Activated CD8-positive, alpha-beta T cell treated with anti-CD3 and anti-CD28 coated beads, Interleukin-2, amount 10 ng/mL, durations not matched to agents 7 days and 5 days (primary cell): ENCODE measurements at regions of chr5 and their contacts with region 1.

Region 1: DNA sequence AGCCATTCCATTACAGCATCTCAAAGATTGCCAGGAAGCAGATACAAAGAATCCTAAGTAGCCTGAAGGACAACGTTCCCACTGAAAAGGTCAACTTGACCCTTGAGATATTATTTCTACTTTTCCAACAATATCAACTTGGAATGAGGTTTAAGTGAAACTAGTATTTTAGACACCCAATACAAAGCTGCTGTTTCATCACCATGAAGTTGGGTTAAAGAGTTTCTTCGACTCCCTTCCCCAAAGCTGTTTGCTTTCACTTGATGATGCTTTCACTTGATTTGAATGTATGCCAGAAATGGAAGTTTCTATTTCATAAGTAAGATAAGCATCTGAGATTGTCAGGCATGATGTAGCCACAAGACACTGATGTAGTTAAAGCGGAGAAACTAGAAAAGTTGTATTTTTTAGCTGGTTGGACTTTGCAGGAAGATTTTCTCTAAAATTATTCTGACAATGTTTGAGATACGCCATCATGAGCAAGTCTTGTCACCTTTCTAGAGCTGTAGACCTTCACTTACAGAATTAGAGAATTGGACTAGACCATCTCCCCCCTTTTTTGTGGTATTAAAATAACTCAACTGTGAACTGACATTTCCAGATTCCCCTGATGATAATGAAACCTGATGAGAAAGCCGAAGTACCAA is 20.1 kb downstream of the MOCS2 start:
- DNase-seq: no peak
- ATAC-seq: peak; percentile 57
- H3K4me3 Mint-ChIP-seq: peak overlapping the region; percentile 29
- H3K27ac Mint-ChIP-seq: peak overlapping the region; percentile 61
- H3K4me1 Mint-ChIP-seq: peaks cover 54% of the 10 kb centered on the region
- H3K27me3 Mint-ChIP-seq: no peaks in the 10 kb centered on the region

Region 2: GRCh38 chr5:52989781-52990527 is 99.5 kb before region 1 on chr5:
- CTCF ChIA-PET with region 1: interaction called, 25 read pairs
- POLR2A ChIA-PET with region 1: no interaction called
- DNase-seq: peak; percentile 56
- ATAC-seq: peak; percentile 63
- H3K4me3 Mint-ChIP-seq: peak overlapping the region; percentile 78
- H3K27ac Mint-ChIP-seq: peak overlapping the region; percentile 33
- H3K4me1 Mint-ChIP-seq: peaks cover 30% of the 10 kb centered on the region
- H3K27me3 Mint-ChIP-seq: peaks cover 32% of the 10 kb centered on the region

Region 3: GRCh38 chr5:53041071-53041692 is 48.3 kb before region 1 on chr5:
- CTCF ChIA-PET with region 1: interaction called, 34 read pairs
- POLR2A ChIA-PET with region 1: no interaction called
- DNase-seq: peak; percentile 59
- ATAC-seq: peak; percentile 95
- H3K4me3 Mint-ChIP-seq: peak overlapping the region; percentile 73
- H3K27ac Mint-ChIP-seq: peak overlapping the region; percentile 88
- H3K4me1 Mint-ChIP-seq: peaks cover 79% of the 10 kb centered on the region
- H3K27me3 Mint-ChIP-seq: peaks cover 5% of the 10 kb centered on the region

Region 4: DNA sequence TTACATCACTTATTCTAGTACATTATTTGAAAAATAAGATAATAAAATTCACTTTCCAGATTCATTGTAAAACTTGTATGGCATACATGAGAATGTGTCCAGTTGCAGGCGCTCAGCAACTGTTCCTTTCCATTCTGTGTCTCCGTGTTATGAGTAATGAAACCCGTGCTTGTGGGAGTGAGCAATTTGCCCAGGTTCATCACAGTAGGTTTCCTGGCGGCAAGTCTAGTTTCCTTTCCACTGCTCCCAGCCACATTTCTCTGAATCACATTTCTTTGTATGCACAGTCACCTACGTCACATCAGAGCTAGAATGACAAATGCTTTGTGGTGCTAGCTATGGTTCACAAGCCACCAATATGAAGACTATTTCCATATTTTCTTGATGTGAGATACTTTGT is 19.8 kb before region 1 on chr5:
- CTCF ChIA-PET with region 1: interaction called, 12 read pairs
- POLR2A ChIA-PET with region 1: interaction called, 3 read pairs
- DNase-seq: peak; percentile 82
- ATAC-seq: peak; percentile 94
- H3K4me3 Mint-ChIP-seq: peak overlapping the region; percentile 44
- H3K27ac Mint-ChIP-seq: peak overlapping the region; percentile 80
- H3K4me1 Mint-ChIP-seq: peaks cover 30% of the 10 kb centered on the region
- H3K27me3 Mint-ChIP-seq: peaks cover 5% of the 10 kb centered on the region

Region 5: DNA sequence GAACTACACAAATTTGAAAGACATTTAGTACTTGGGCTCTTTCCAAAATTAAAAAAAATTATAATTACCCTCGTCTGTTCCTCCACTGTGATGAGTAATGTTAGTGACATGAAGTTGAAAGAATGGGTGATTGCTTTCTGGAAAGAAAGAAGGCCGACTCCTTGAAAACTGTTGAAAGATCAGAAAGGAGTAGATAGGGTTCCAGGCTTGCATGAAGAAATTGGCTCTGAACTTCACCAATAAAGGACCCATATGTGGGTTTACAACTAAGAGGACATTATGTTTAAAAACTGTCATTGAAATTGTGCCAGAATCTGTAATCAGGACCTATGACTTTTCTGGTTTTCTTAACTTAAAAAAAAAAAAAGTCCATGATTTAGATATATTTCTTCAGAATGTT is 40.8 kb after region 1 on chr5:
- CTCF ChIA-PET with region 1: no interaction called
- POLR2A ChIA-PET with region 1: no interaction called
- DNase-seq: no peak
- ATAC-seq: no peak
- H3K4me3 Mint-ChIP-seq: no peak overlapping the region
- H3K27ac Mint-ChIP-seq: no peak overlapping the region
- H3K4me1 Mint-ChIP-seq: no peaks in the 10 kb centered on the region
- H3K27me3 Mint-ChIP-seq: peaks cover 2% of the 10 kb centered on the region